Sigmoid colon (tissue), 7 donors: ENCODE measurements at regions of chrX and their contacts with region 1.

Region 1: DNA sequence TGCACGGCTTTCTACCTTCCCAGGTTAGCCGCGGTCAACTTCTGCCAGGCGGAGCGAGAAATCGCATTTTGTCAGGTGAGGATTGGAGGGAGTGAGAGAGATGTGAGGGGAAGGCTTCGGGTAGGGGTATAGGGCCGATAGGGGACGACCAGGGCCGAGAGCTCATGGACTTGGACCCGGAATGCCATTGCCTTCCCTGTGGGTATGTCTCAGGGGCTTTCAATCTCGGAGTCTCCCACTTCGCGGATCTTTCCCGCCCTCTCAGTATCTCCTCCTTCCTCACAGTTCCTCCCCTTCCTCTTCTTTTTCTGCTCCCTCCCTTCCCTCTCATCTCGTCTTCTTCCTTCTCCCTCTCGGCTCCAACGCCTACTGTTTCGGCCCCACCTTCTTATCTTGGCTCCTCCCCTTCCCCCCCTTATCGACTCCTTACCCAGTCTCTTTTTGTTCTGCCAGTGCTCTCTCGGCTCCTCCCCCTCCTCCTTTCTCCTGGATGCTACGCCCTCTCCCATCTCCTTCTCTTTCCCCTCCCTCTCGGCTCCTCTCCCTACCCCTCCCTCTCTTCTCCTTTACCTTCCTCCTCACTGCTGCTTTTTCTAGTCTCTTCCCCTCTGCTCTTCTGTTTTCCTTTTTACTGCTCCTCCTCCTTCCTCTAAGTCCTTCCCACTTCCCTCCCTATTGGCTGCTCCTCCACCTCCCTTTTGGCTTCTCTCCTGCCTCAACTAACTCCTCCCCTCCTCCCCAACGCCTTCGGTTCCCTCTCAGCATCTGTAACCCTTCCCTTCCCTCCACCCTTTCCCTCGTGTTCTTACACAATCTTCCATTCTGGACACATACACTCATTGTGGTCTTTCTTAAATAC is 29.4 kb upstream of the RBMX start:
- DNase-seq: peak; percentile 96
- H3K4me3 ChIP-seq: peak overlapping the region; percentile 46 to 61 (median 56)
- H3K27ac ChIP-seq: peak overlapping the region; percentile 81 to 89 (median 87)
- H3K4me1 ChIP-seq: peaks cover 0 to 7% (median 2%) of the 10 kb centered on the region in 4 donors
- H3K27me3 ChIP-seq: no peaks in the 10 kb centered on the region
- CTCF ChIP-seq: peak in 1 of 4 experiments; percentile 9
- EP300 ChIP-seq: no peak
- POLR2A ChIP-seq: peak; percentile 23 to 52

Region 2: DNA sequence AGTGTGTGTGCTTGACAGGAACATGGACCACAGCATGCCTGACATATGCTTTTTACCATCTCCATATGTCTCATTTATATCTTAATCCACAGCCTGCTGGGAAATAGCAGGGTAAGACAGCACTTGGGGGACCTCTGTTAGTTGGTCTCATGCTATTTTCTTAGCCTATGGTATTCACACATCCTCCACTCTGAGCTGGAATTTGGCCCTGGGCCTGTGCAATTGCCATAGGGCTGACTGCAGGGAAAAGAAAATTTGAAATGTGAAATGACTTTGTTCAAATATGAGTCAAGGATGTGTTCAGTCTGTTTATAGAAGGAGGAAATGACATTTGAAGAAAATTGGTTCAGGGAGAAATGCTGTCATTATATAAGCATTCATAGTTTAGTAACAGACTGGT is 649.2 kb before region 1 on chrX:
- intact Hi-C with region 1: loop called (anchors 5 kb)
- DNase-seq: no peak
- H3K4me3 ChIP-seq: no peak overlapping the region
- H3K27ac ChIP-seq: peak overlapping the region in 1 of 4 donors; percentile 14
- H3K4me1 ChIP-seq: no peaks in the 10 kb centered on the region
- H3K27me3 ChIP-seq: no peaks in the 10 kb centered on the region
- CTCF ChIP-seq: no peak
- EP300 ChIP-seq: no peak
- POLR2A ChIP-seq: no peak

Region 3: GRCh38 chrX:136679531-136679930 is 230.4 kb before region 1 on chrX:
- intact Hi-C with region 1: no loop called
- DNase-seq: no peak
- H3K4me3 ChIP-seq: no peak overlapping the region
- H3K27ac ChIP-seq: no peak overlapping the region
- H3K4me1 ChIP-seq: no peaks in the 10 kb centered on the region
- H3K27me3 ChIP-seq: no peaks in the 10 kb centered on the region
- CTCF ChIP-seq: no peak
- EP300 ChIP-seq: no peak
- POLR2A ChIP-seq: no peak

Region 4: GRCh38 chrX:136880452-136881013 is 29.4 kb before region 1 on chrX and contains the start of gene RBMX:
- intact Hi-C with region 1: loop called (anchors 1 kb)
- DNase-seq: peak; percentile 97
- H3K4me3 ChIP-seq: peak within 1 kb of the TSS; percentile 66 to 78 (median 74)
- H3K27ac ChIP-seq: peak within 1 kb of the TSS; percentile 93 to 95 (median 94)
- H3K4me1 ChIP-seq: peaks cover 0 to 13% (median 3%) of the 10 kb centered on the region in 4 donors
- H3K27me3 ChIP-seq: no peaks in the 10 kb centered on the region
- CTCF ChIP-seq: no peak
- EP300 ChIP-seq: no peak
- POLR2A ChIP-seq: peak; percentile 97 to 98
- total RNA-seq, gene RBMX: 173 to 334 (median 243) TPM

Region 5: GRCh38 chrX:137033774-137034507 is 124.0 kb after region 1 on chrX and contains the start of gene GPR101:
- intact Hi-C with region 1: no loop called
- DNase-seq: no peak
- H3K4me3 ChIP-seq: peak within 1 kb of the TSS in 2 of 4 donors; percentile 13 to 14
- H3K27ac ChIP-seq: no peak within 1 kb of the TSS
- H3K4me1 ChIP-seq: peaks cover 0 to 14% (median 9%) of the 10 kb centered on the region in 4 donors
- H3K27me3 ChIP-seq: peaks cover 7 to 39% (median 11%) of the 10 kb centered on the region in 3 donors
- CTCF ChIP-seq: no peak
- EP300 ChIP-seq: no peak
- POLR2A ChIP-seq: no peak
- total RNA-seq, gene GPR101: not detected